ENCODE measurements at regions of chr21 and their contacts with region 1.

Region 1: DNA sequence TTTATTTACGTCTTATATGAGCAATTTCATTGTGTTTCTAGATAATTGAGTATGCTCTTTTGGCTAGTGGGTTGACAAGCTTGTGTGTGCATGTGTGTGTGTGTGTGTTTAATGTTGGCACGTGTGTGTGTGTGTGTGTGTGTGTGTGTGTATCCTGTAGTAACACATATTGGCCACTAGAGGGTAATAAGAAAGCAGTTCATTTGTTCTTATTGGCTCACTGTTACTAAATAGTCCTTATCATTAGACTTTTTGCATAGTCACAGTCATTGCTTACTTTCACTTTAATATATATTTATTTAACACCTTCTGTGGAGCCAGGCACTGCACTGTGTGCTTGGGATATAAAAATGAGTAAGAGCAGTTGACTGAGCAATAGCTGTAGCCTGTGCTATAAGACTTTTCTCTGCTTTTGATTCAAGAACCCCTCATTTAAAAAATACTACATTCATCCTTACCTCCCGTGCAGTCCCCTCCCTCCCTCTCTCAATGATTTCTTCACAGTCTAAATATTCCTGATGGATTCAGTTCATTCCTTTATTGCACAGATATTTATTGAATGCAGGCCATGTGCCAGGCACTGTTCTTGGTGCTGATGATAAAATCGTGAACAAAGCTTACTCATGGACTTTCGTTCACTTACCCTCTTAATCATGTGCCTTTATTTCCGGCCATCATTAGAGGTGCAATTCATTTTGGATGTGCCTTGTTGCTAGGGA is 96.7 kb downstream of the DYRK1A start:
- DNase-seq: peak in 3 of 4 donors; percentile 51 to 60 (median 59)
- ATAC-seq: peak; percentile 94
- H3K4me3 ChIP-seq: no peak overlapping the region
- H3K27ac ChIP-seq: peak overlapping the region; percentile 18 to 72 (median 60)
- H3K4me1 ChIP-seq: peaks cover 47% of the 10 kb centered on the region
- H3K27me3 ChIP-seq: no peaks in the 10 kb centered on the region
- CTCF ChIP-seq: peak; percentile 10 to 98 (median 71)
- POLR2A ChIP-seq: no peak

Region 2: GRCh38 chr21:37375866-37376574 is 87.2 kb before region 1 on chr21:
- intact Hi-C with region 1: loop called (anchors 5 kb)
- DNase-seq: no peak
- ATAC-seq: no peak
- H3K4me3 ChIP-seq: no peak overlapping the region
- H3K27ac ChIP-seq: no peak overlapping the region
- H3K4me1 ChIP-seq: peaks cover 85% of the 10 kb centered on the region
- H3K27me3 ChIP-seq: no peaks in the 10 kb centered on the region
- CTCF ChIP-seq: no peak
- POLR2A ChIP-seq: no peak

Measured in body of pancreas (tissue), 4 donors.